IMR-90 (cell line): ENCODE measurements at regions of chr9 and their contacts with region 1.

Region 1: DNA sequence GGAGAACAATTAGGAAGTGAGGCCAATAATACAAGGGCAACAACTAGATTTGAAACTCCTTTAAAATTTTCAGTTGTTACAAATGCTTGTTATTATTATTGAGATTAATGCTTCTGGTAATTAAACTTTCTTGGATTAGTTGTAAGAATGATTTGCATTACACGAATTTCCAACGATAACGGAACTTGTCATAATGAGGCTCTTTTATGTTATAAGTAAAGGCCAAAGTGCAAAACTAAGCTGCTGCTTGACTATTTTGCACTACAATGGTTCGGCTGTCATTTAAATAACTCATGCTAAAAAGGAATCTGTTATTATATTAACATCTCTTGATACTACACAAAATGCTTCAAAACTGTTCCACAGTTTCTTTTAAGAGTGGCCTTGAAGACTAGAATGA is 1007.1 kb downstream of the PTPRD start:
- DNase-seq: no peak
- ATAC-seq: no peak
- H3K4me3 ChIP-seq: no peak overlapping the region
- H3K27ac ChIP-seq: no peak overlapping the region
- H3K4me1 ChIP-seq: no peaks in the 10 kb centered on the region
- H3K27me3 ChIP-seq: no peaks in the 10 kb centered on the region
- CTCF ChIP-seq: no peak
- POLR2A ChIP-seq: no peak
- RAD21 ChIP-seq: no peak

Region 2: DNA sequence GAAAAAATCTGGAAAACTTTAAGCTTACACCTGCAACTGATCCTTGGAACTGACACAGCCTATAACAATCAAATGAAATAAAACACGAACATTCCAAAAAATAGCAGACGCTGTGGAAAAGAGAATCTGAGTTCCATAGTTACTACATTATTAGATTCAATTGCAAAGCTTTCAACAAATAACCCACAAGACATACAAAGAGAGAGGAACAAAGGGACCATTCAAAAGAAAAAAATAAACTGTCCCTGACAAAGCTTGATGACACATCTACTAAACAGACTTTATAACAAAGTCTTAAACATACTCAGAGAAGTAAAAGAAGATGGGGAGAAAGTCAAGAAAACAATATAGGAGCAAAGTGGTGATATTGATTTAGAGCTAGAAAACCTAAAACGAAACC is 116.5 kb before region 1 on chr9:
- CTCF ChIA-PET with region 1: no interaction called
- POLR2A ChIA-PET with region 1: no interaction called
- dilution Hi-C with region 1: no loop called
- in situ Hi-C with region 1: no loop called
- intact Hi-C with region 1: no loop called
- DNase-seq: no peak
- ATAC-seq: no peak
- H3K4me3 ChIP-seq: no peak overlapping the region
- H3K27ac ChIP-seq: no peak overlapping the region
- H3K4me1 ChIP-seq: no peaks in the 10 kb centered on the region
- H3K27me3 ChIP-seq: no peaks in the 10 kb centered on the region
- CTCF ChIP-seq: no peak
- POLR2A ChIP-seq: no peak
- RAD21 ChIP-seq: no peak

Region 3: GRCh38 chr9:9499546-9499945 is 106.1 kb before region 1 on chr9:
- CTCF ChIA-PET with region 1: no interaction called
- POLR2A ChIA-PET with region 1: no interaction called
- dilution Hi-C with region 1: no loop called
- in situ Hi-C with region 1: no loop called
- intact Hi-C with region 1: no loop called
- DNase-seq: no peak
- ATAC-seq: no peak
- H3K4me3 ChIP-seq: no peak overlapping the region
- H3K27ac ChIP-seq: no peak overlapping the region
- H3K4me1 ChIP-seq: no peaks in the 10 kb centered on the region
- H3K27me3 ChIP-seq: no peaks in the 10 kb centered on the region
- CTCF ChIP-seq: no peak
- POLR2A ChIP-seq: no peak
- RAD21 ChIP-seq: no peak

Region 4: DNA sequence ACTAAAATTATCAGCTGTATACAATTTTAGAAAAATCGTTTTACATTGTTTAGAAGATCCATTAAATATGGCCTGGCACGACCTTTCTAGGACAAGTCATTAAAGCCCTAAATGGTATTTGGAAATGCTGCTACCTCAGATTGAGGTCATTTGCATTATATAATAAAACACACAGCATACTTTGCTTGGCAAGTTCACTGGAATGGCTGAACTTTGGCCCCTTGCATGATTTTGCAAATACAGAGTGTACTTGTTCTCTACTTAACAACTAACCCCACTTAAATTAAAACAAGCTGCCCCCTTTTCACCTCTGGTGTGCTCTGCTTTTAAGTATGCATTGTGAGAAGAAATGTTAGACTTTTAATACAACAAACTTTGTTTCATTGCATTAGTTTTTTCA is 147.0 kb after region 1 on chr9:
- CTCF ChIA-PET with region 1: no interaction called
- POLR2A ChIA-PET with region 1: no interaction called
- dilution Hi-C with region 1: no loop called
- in situ Hi-C with region 1: no loop called
- intact Hi-C with region 1: no loop called
- DNase-seq: no peak
- ATAC-seq: no peak
- H3K4me3 ChIP-seq: no peak overlapping the region
- H3K27ac ChIP-seq: no peak overlapping the region
- H3K4me1 ChIP-seq: no peaks in the 10 kb centered on the region
- H3K27me3 ChIP-seq: no peaks in the 10 kb centered on the region
- CTCF ChIP-seq: no peak
- POLR2A ChIP-seq: no peak
- RAD21 ChIP-seq: no peak

Region 5: GRCh38 chr9:9790216-9790872 is 184.7 kb after region 1 on chr9:
- CTCF ChIA-PET with region 1: interaction called, 9 read pairs
- POLR2A ChIA-PET with region 1: interaction called, 7 read pairs
- dilution Hi-C with region 1: no loop called
- in situ Hi-C with region 1: no loop called
- intact Hi-C with region 1: loop called (anchors 2 kb)
- DNase-seq: no peak
- ATAC-seq: no peak
- H3K4me3 ChIP-seq: no peak overlapping the region
- H3K27ac ChIP-seq: no peak overlapping the region
- H3K4me1 ChIP-seq: no peaks in the 10 kb centered on the region
- H3K27me3 ChIP-seq: no peaks in the 10 kb centered on the region
- CTCF ChIP-seq: peak; percentile 49
- POLR2A ChIP-seq: no peak
- RAD21 ChIP-seq: peak; percentile 54

Region 6: DNA sequence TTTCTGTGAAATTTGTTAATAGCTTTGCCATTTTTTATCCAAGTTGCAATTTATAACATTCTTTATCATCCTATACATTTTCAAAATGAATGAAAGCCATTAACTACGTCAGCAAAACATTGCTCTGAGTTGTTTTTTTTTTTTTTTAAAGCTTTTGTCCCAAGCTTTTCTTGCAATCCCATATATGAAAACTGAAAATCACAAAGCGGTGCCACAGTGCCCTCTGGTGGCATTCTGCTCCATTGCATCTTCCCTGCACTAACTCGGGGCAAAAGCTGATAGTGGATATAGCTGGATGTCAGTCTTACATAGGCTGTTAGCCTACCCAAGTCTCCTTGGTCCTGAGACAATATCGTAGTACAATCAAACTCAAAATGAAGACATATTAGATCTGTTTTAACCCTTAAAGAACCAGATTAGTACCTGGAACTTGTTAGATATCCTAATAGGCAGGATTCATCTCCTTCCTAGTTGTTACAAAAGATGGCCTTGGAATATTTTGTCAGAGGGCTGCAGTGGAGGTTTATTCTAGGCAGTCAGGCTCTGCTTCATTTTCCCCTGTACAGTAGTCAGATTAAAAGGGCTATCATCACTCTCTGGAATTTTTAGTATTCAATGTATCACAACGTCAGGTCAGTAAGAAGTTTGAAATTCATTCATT is 337.2 kb after region 1 on chr9:
- CTCF ChIA-PET with region 1: interaction called, 6 read pairs
- POLR2A ChIA-PET with region 1: no interaction called
- dilution Hi-C with region 1: no loop called
- in situ Hi-C with region 1: no loop called
- intact Hi-C with region 1: loop called (anchors 5 kb)
- DNase-seq: peak; percentile 42
- ATAC-seq: peak; percentile 80
- H3K4me3 ChIP-seq: no peak overlapping the region
- H3K27ac ChIP-seq: no peak overlapping the region
- H3K4me1 ChIP-seq: no peaks in the 10 kb centered on the region
- H3K27me3 ChIP-seq: no peaks in the 10 kb centered on the region
- CTCF ChIP-seq: peak; percentile 85
- POLR2A ChIP-seq: no peak
- RAD21 ChIP-seq: peak; percentile 65